ENCODE measurements at regions of chr9 and their contacts with region 1.

Region 1: DNA sequence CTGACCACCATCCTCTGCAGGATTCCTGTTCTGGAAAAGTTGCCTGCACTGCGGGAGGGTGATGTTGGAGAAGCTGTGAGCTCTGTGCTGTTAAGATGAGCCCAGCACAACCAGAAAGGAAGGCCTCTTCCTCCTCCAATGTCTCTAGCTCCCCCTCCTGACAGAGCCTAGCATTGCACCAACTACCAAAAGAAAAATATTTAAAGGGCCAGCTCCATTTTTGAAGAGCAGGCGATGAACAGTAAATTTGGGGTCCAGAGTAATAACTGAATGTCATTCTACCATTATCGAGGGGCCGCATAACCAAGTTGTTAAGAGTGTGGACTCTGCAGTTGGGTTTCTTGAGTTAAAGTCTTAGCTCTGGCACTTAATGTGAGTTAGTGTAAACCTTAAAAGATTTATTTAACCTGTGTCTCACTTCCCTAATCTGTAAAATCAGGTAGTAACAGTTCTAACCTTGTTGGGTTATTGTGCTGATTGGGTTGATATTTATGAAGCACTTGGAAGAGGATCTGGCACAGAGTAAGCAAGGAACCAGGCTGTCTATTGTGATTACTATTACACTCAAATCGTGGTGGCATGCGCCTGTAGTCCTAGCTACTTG is 3.9 kb downstream of the TEX53 start:
- DNase-seq: peak in 3 of 4 donors; percentile 42 to 76 (median 58)
- ATAC-seq: peak; percentile 98
- H3K4me3 ChIP-seq: no peak overlapping the region
- H3K27ac ChIP-seq: no peak overlapping the region
- H3K4me1 ChIP-seq: peaks cover 0 to 4% of the 10 kb centered on the region in 2 donors
- H3K27me3 ChIP-seq: no peaks in the 10 kb centered on the region
- CTCF ChIP-seq: peak; percentile 78 to 83

Region 2: GRCh38 chr9:114405294-114406034 is 248.2 kb before region 1 on chr9:
- intact Hi-C with region 1: loop called in 1 of 2 experiments (anchors 10 kb)
- DNase-seq: peak in 3 of 4 donors; percentile 74 to 87 (median 81)
- ATAC-seq: peak; percentile 95
- H3K4me3 ChIP-seq: no peak overlapping the region
- H3K27ac ChIP-seq: no peak overlapping the region
- H3K4me1 ChIP-seq: no peaks in the 10 kb centered on the region
- H3K27me3 ChIP-seq: no peaks in the 10 kb centered on the region
- CTCF ChIP-seq: peak; percentile 79 to 94

Region 3: GRCh38 chr9:114484854-114485443 is 168.7 kb before region 1 on chr9:
- intact Hi-C with region 1: loop called in 1 of 2 experiments (anchors 5 kb)
- DNase-seq: no peak
- ATAC-seq: no peak
- H3K4me3 ChIP-seq: no peak overlapping the region
- H3K27ac ChIP-seq: no peak overlapping the region
- H3K4me1 ChIP-seq: peaks cover 0 to 8% of the 10 kb centered on the region in 2 donors
- H3K27me3 ChIP-seq: no peaks in the 10 kb centered on the region
- CTCF ChIP-seq: no peak

Region 4: GRCh38 chr9:114852050-114852594 is 198.5 kb after region 1 on chr9:
- intact Hi-C with region 1: no loop called
- DNase-seq: peak in 3 of 4 donors; percentile 59 to 83 (median 72)
- ATAC-seq: peak; percentile 83
- H3K4me3 ChIP-seq: no peak overlapping the region
- H3K27ac ChIP-seq: no peak overlapping the region
- H3K4me1 ChIP-seq: peaks cover 17 to 18% of the 10 kb centered on the region in 2 donors
- H3K27me3 ChIP-seq: no peaks in the 10 kb centered on the region
- CTCF ChIP-seq: no peak